SK-N-SH (cell line): ENCODE measurements at regions of chr19 and their contacts with region 1.

Region 1: DNA sequence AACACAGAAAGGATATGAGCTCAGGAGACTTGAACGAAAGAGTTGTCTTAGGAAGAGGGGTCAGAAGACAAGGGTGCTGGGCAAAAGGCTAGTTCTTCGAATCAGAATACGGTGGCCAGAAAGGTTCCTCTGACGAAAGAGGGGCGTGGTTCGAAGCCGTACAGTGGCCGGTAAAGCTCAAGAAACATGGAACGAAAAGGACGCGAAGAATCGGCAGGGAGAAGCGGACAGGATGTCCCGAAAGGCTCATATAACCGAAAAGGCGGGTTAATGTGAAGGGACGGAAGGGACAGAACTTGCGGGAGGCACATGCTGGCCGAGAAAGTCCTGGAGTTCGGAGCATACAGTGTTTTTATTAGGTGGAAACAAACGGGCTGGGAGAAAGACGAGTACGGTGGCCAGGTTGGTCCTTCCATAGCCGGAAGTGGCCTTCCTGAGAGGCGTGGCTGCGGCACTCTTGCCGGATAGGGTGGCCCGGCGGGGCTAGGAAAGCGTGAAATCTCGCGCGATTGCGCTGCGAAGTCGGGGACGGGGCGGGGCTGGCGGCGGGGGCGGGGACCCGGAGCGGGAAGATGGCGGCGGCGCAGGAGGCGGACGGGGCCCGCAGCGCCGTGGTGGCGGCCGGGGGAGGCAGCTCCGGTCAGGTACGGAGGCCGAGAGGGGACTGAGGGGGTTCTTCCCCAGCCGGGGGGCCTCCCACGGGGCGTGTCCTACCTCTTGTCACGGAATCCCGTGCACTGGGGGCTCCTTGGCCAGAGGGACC is at the start of gene CLPTM1:
- DNase-seq: peak; percentile 98
- H3K4me3 ChIP-seq: peak within 1 kb of the TSS; percentile 93 to 99
- H3K27ac ChIP-seq: peak within 1 kb of the TSS; percentile 94 to 98
- H3K4me1 ChIP-seq: peaks cover 0 to 25% of the 10 kb centered on the region in 2 experiments; a peak in 2 of 4 replicates
- H3K27me3 ChIP-seq: no peaks in the 10 kb centered on the region
- CTCF ChIP-seq: no peak
- EP300 ChIP-seq: no peak
- RAD21 ChIP-seq: no peak
- polyA plus RNA-seq, gene CLPTM1: 58.4 and 86.5 TPM in 2 replicates

Region 2: GRCh38 chr19:44876930-44877535 is 78.0 kb before region 1 on chr19:
- CTCF ChIA-PET with region 1: no interaction called
- POLR2A ChIA-PET with region 1: no interaction called
- DNase-seq: no peak
- H3K4me3 ChIP-seq: no peak overlapping the region
- H3K27ac ChIP-seq: peak overlapping the region in 1 of 2 experiments; percentile 66; a peak in 2 of 4 replicates
- H3K4me1 ChIP-seq: peaks cover 0 to 13% of the 10 kb centered on the region in 2 experiments; a peak in 3 of 4 replicates
- H3K27me3 ChIP-seq: no peaks in the 10 kb centered on the region
- CTCF ChIP-seq: no peak
- EP300 ChIP-seq: no peak
- RAD21 ChIP-seq: no peak

Region 3: DNA sequence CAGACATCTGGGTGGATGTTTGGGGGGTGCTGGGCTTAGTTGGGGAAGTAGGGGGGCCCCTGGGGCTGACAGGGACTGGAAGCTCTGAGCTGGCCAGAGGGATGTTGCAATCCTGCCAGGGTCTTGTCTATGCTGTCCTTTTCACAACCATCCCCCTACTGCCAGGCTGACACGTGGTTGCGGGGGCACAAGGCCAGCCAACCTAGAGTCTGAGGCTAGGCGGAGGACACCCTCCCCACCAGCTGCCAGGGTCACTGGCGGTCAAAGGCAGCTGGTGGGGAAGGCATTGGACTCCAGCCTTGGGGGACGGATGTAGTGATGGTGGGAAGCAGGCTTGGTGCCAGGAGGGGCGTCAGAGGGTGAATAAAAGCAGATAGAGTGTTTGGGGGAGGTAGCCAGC is 42.2 kb before region 1 on chr19:
- CTCF ChIA-PET with region 1: interaction called, 57 read pairs
- POLR2A ChIA-PET with region 1: interaction called, 9 read pairs
- DNase-seq: no peak
- H3K4me3 ChIP-seq: no peak overlapping the region
- H3K27ac ChIP-seq: no peak overlapping the region
- H3K4me1 ChIP-seq: peaks cover 4% of the 10 kb centered on the region in 2 experiments; a peak in 1 of 4 replicates
- H3K27me3 ChIP-seq: no peaks in the 10 kb centered on the region
- CTCF ChIP-seq: no peak
- EP300 ChIP-seq: no peak
- RAD21 ChIP-seq: no peak